Calu3 (cell line): ENCODE measurements at regions of chr10 and their contacts with region 1.

Region 1: DNA sequence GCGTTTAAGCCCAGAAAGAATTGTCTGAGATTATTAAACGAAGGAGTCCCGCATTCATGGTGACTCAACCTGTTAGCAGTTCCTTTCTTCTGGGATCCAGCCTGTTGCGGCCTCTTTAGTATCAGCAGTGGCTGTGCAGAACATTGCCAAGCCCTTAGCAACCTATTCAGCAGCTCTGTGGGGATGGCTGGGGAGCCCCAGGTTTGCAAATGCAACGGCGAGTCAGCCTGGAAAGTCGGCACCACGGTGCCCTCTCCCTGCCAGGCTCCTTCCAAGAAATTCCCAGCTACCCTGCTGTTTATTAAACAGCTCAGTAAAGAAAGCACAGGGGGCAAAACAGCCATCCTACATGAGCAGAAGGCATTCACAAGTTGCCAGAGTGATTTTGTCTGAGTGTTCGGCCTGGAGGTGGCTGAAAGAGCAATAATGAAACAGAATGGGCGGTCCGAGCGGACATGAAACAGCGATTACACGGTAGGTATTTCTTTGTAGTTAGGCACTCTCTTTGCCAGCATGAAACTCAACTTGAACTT is 198.3 kb downstream of the BAMBI start:
- DNase-seq: peak; percentile 48
- H3K4me3 Mint-ChIP-seq: peak overlapping the region; percentile 71
- H3K27ac Mint-ChIP-seq: peak overlapping the region; percentile 92
- H3K4me1 Mint-ChIP-seq: peaks cover 23% of the 10 kb centered on the region
- H3K27me3 Mint-ChIP-seq: no peaks in the 10 kb centered on the region
- CTCF ChIP-seq: no peak

Region 2: GRCh38 chr10:28807760-28808613 is 67.6 kb before region 1 on chr10:
- CTCF ChIA-PET with region 1: interaction called, 3 read pairs
- intact Hi-C with region 1: loop called (anchors 5 kb)
- DNase-seq: peak; percentile 13
- H3K4me3 Mint-ChIP-seq: peak overlapping the region; percentile 45
- H3K27ac Mint-ChIP-seq: peak overlapping the region; percentile 28
- H3K4me1 Mint-ChIP-seq: peaks cover 13% of the 10 kb centered on the region
- H3K27me3 Mint-ChIP-seq: no peaks in the 10 kb centered on the region
- CTCF ChIP-seq: no peak

Region 3: DNA sequence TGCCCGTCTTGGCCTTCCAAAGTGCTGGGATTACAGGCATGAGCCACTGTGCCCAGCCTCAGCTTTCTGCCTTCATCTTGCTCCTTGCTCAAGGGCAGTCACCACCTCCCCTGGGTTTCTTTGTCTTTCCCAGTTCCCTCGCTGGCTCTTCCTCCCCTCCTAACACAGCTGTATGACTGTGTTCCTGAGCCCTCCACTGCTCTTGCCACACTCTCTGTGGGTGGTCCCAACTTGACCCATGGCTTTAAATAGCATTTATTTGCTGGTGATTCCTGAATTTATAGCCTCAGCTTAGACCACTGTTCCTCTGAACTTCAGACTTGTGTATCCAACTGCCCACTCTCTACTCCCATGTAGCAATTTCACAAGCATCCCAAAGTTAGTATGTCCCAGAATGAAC is 17.0 kb before region 1 on chr10:
- CTCF ChIA-PET with region 1: no interaction called
- intact Hi-C with region 1: no loop called
- DNase-seq: no peak
- H3K4me3 Mint-ChIP-seq: no peak overlapping the region
- H3K27ac Mint-ChIP-seq: no peak overlapping the region
- H3K4me1 Mint-ChIP-seq: peaks cover 3% of the 10 kb centered on the region
- H3K27me3 Mint-ChIP-seq: no peaks in the 10 kb centered on the region
- CTCF ChIP-seq: no peak

Region 4: GRCh38 chr10:28928484-28928883 is 52.9 kb after region 1 on chr10:
- CTCF ChIA-PET with region 1: no interaction called
- intact Hi-C with region 1: loop called (anchors 2 kb)
- DNase-seq: peak; percentile 73
- H3K4me3 Mint-ChIP-seq: no peak overlapping the region
- H3K27ac Mint-ChIP-seq: peak overlapping the region; percentile 9
- H3K4me1 Mint-ChIP-seq: peaks cover 15% of the 10 kb centered on the region
- H3K27me3 Mint-ChIP-seq: no peaks in the 10 kb centered on the region
- CTCF ChIP-seq: no peak

Region 5: DNA sequence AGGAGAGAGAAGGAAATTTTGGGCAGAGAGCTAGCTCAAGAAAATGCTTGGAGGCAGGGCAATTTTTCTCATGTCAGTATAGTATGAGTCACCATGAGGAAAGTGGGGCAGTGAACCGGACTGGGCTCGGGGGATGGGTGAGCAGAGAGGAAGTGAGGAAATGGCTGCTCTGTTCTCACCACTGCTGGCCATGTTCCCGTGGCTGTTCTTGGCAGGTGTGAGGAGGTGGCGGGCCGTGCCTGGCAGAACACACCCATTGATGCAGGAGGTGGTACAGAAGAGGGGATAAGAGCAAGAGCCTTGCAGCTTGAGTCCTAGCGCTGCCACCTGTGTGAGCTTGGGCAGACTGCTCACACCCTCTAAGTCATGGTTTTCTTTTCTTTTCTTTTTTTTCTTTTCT is 108.8 kb after region 1 on chr10:
- CTCF ChIA-PET with region 1: no interaction called
- intact Hi-C with region 1: loop called (anchors 5 kb)
- DNase-seq: peak; percentile 84
- H3K4me3 Mint-ChIP-seq: peak overlapping the region; percentile 7
- H3K27ac Mint-ChIP-seq: peak overlapping the region; percentile 48
- H3K4me1 Mint-ChIP-seq: peaks cover 26% of the 10 kb centered on the region
- H3K27me3 Mint-ChIP-seq: no peaks in the 10 kb centered on the region
- CTCF ChIP-seq: no peak